ENCODE measurements at regions of chr7 and their contacts with region 1.

Region 1: GRCh38 chr7:131625817-131626372 is 69.5 kb upstream of the PODXL start:
- DNase-seq: peak; percentile 76
- H3K4me3 ChIP-seq: no peak overlapping the region
- H3K27ac ChIP-seq: peak overlapping the region; percentile 96
- H3K4me1 ChIP-seq: peaks cover 73% of the 10 kb centered on the region
- H3K27me3 ChIP-seq: no peaks in the 10 kb centered on the region
- CTCF ChIP-seq: no peak
- POLR2A ChIP-seq: no peak

Region 2: GRCh38 chr7:130887182-130888016 is 738.5 kb before region 1 on chr7:
- CTCF ChIA-PET with region 1: no interaction called
- POLR2A ChIA-PET with region 1: no interaction called
- dilution Hi-C with region 1: no loop called
- intact Hi-C with region 1: loop called (anchors 2 kb)
- DNase-seq: peak; percentile 89
- H3K4me3 ChIP-seq: no peak overlapping the region
- H3K27ac ChIP-seq: peak overlapping the region; percentile 98
- H3K4me1 ChIP-seq: peaks cover 74% of the 10 kb centered on the region
- H3K27me3 ChIP-seq: no peaks in the 10 kb centered on the region
- CTCF ChIP-seq: no peak
- POLR2A ChIP-seq: peak; percentile 72

Region 3: DNA sequence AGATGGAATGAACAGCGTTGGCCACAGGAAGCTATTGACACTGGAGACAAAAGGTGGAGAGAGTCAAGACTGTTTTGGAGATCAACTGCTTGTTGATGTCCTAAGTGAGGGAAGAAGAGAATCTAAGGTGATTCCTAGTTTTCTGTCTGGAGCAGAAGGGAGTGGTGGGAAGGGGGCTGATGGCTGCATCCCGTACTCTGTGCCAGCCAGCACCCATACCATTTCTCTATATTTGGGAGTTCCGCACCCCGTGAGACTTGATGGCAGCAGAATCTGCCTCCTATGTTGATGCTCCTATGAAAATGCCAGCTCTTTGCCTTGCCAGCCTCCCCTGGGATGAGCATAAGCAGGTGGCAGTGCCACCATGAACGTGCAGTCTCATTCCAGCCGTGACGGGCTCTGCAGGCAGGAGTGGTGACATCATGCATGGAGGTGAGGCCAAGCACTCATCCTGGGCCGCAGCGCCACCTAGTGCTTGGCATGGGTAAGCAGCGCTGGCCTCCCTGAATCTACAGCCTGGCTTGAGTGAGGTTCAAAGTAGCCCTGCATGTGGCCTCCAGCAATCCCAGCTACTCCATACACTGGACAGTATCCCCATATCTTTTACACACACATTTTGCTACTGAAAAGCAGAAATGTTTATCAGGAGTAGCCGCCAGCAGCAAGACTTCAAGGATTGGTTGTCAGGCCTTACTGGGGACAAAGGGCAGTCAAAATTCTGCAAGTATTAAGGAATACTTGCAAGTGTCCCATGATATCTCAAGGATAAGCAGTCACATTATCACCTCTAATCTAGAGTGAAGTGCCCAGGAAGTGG is 112.4 kb before region 1 on chr7:
- CTCF ChIA-PET with region 1: interaction called, 10 read pairs
- POLR2A ChIA-PET with region 1: no interaction called
- dilution Hi-C with region 1: no loop called
- intact Hi-C with region 1: loop called (anchors 10 kb)
- DNase-seq: peak; percentile 88
- H3K4me3 ChIP-seq: no peak overlapping the region
- H3K27ac ChIP-seq: peak overlapping the region; percentile 67
- H3K4me1 ChIP-seq: peaks cover 21% of the 10 kb centered on the region
- H3K27me3 ChIP-seq: no peaks in the 10 kb centered on the region
- CTCF ChIP-seq: peak; percentile 97 to 100
- POLR2A ChIP-seq: no peak

Region 4: GRCh38 chr7:131540441-131541162 is 85.3 kb before region 1 on chr7:
- CTCF ChIA-PET with region 1: interaction called, 6 read pairs
- POLR2A ChIA-PET with region 1: no interaction called
- dilution Hi-C with region 1: no loop called
- intact Hi-C with region 1: loop called (anchors 1 kb)
- DNase-seq: peak; percentile 89
- H3K4me3 ChIP-seq: no peak overlapping the region
- H3K27ac ChIP-seq: peak overlapping the region; percentile 74
- H3K4me1 ChIP-seq: peaks cover 50% of the 10 kb centered on the region
- H3K27me3 ChIP-seq: no peaks in the 10 kb centered on the region
- CTCF ChIP-seq: peak; percentile 8 to 24
- POLR2A ChIP-seq: no peak

Region 5: DNA sequence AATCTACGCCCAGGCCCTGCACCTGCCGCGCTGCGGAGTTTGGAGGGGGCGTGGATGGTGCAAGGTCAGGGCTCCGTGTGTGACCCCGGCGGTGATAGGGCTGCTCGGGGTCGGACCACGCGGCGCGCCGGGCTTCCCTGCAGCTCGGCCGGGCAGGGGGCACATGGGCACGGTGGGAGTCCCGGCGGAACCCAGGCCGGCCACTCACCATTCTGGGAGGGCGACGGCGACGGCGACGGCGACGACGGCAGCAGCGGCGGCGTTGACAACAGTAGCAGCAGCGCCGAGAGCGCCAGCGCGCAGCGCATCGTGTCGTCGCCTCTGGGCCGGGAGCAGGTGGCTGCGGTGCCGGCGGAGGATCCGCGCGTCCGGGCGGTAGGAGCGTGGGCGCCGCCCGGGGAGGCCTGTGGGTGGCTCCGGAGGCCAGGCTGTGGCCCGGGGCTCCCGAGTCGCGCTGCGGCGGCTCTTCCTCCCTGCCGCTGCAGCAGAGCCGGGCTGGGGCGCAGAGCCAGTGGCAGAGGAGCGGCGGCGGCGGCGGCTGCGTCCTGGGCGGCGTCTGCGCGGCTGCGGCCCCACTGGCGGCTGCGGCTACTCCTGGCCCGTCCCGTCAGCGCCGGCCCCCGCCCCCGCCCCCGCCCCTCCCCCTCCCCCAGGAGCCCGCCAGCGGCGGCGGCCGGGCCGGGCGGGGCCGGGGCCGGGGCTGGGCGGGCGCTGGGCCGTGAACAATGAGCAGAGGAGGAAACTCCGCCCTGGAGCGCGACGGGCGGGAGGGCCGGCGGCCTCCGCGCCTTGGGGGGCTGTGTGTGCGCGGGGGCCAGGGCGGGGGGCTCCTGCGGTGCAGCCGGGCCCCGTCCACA is 69.6 kb before region 1 on chr7 and contains the start of gene PODXL:
- CTCF ChIA-PET with region 1: interaction called, 4 read pairs
- POLR2A ChIA-PET with region 1: no interaction called
- dilution Hi-C with region 1: no loop called
- intact Hi-C with region 1: loop called (anchors 1 kb)
- DNase-seq: peak; percentile 75
- H3K4me3 ChIP-seq: peak within 1 kb of the TSS; percentile 78 to 82 (median 79)
- H3K27ac ChIP-seq: peak within 1 kb of the TSS; percentile 68
- H3K4me1 ChIP-seq: peaks cover 29% of the 10 kb centered on the region
- H3K27me3 ChIP-seq: no peaks in the 10 kb centered on the region
- CTCF ChIP-seq: no peak
- POLR2A ChIP-seq: peak; percentile 75
- total RNA-seq, gene PODXL: 156 and 264 TPM in 2 replicates

Region 6: GRCh38 chr7:132380059-132380458 is 754.2 kb after region 1 on chr7:
- CTCF ChIA-PET with region 1: no interaction called
- POLR2A ChIA-PET with region 1: no interaction called
- dilution Hi-C with region 1: no loop called
- intact Hi-C with region 1: no loop called
- DNase-seq: no peak
- H3K4me3 ChIP-seq: no peak overlapping the region
- H3K27ac ChIP-seq: no peak overlapping the region
- H3K4me1 ChIP-seq: peaks cover 3% of the 10 kb centered on the region
- H3K27me3 ChIP-seq: no peaks in the 10 kb centered on the region
- CTCF ChIP-seq: no peak
- POLR2A ChIP-seq: no peak

Measured in endothelial cell of umbilical vein (primary cell).